Gastrocnemius medialis (tissue), 4 donors: ENCODE measurements at regions of chr7 and their contacts with region 1.

Region 1: DNA sequence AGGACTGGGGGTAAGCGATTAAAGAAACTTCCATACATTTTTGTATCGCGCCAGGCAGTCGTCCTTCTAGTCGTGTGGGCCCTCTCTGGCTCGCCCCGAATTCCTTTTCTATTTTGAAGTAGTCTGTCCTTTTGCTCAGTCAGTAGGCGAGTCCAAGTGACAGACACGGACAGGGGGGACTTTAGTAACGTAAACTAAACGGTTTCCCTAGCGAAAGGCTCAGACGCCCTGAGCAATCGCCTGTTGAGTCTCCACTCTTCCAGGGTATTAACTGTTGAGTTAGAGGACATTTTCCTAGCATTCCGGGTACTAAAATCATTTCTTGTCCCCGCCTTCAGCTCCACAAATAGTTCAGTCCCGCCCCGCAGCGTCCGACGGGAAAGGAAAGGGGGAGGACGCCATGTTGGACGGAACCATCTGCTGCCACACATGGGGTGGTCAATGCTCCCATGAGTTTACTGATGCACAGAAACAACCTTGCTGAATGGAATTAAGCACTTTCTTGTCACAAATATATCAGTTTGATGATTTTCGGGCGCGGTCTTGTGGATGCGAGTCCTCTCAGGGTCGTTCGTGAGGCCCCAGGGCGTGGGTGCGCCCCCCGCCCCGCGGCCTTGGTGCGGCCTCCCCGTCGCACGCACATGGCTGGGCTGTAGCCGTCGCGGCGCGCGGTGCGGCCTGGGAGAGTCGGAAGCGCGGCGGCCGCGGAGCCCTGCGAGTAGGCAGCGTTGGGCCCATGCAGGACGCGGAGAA is at the start of gene EIF3B:
- DNase-seq: peak; percentile 86 to 87
- ATAC-seq: peak; percentile 94 to 95
- H3K4me3 ChIP-seq: peak within 1 kb of the TSS; percentile 80 to 96 (median 88)
- H3K27ac ChIP-seq: peak within 1 kb of the TSS; percentile 90 to 100 (median 94)
- H3K4me1 ChIP-seq: peaks cover 33 to 34% of the 10 kb centered on the region in 2 donors
- H3K27me3 ChIP-seq: no peaks in the 10 kb centered on the region
- CTCF ChIP-seq: peak in 2 of 5 experiments; percentile 24 to 53
- POLR2A ChIP-seq: peak; percentile 73 to 89
- total RNA-seq, gene EIF3B: 105 to 207 (median 195) TPM

Region 2: GRCh38 chr7:1569833-1570633 is 784.3 kb before region 1 on chr7 and contains the start of gene PSMG3:
- in situ Hi-C with region 1: no loop called
- intact Hi-C with region 1: loop called (anchors 10 kb)
- DNase-seq: peak; percentile 86 to 87
- ATAC-seq: peak; percentile 83 to 84
- H3K4me3 ChIP-seq: peak within 1 kb of the TSS; percentile 77 to 98 (median 90)
- H3K27ac ChIP-seq: peak within 1 kb of the TSS; percentile 93 to 99 (median 94)
- H3K4me1 ChIP-seq: peaks cover 26 to 42% of the 10 kb centered on the region in 2 donors
- H3K27me3 ChIP-seq: no peaks in the 10 kb centered on the region
- CTCF ChIP-seq: peak; percentile 28 to 53 (median 37)
- POLR2A ChIP-seq: peak; percentile 82 to 85
- total RNA-seq, gene PSMG3: 25.4 to 46.4 (median 32.2) TPM

Region 3: DNA sequence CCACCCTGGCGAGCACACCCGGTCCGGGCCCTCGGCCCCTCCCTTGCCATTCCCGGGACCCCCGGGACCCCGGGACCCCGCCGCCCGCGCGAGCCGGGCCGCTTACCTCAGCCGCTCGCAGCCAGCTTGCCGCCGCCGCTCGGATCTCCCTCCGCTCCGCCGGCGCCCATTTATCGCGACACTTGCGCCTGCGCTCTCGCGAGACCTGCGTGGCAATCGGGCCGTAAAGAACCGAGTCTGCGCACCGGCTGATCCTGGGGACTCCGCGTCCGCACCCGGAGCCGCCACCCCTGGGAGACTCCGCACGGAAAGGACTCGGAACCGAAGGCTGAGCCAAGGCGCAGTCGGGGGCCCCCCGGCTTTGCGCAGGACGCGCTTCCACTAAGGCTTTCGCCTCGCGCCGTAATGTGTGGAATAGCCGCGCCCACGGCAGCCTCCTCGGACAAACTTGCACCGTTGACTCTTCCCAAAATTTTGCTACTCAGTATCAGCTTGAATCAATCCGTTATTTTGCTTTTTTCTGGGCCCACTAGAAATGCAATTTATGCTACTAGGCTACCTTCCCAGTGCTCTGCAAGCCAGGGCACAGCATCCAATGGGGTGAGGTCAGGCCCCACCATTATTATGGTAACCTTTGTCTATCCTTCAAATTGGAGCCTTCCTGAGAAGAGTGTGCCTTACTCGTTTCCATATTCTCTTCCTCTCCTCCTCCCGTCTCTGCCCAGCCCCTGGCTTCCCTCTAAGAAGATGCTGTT is 121.4 kb before region 1 on chr7 and contains the start of gene MAD1L1:
- in situ Hi-C with region 1: no loop called
- intact Hi-C with region 1: loop called (anchors 2 kb)
- DNase-seq: peak; percentile 69 to 78
- ATAC-seq: peak; percentile 95
- H3K4me3 ChIP-seq: peak within 1 kb of the TSS; percentile 82 to 99 (median 92)
- H3K27ac ChIP-seq: peak within 1 kb of the TSS; percentile 73 to 86 (median 80)
- H3K4me1 ChIP-seq: peaks cover 16 to 22% of the 10 kb centered on the region in 2 donors
- H3K27me3 ChIP-seq: no peaks in the 10 kb centered on the region
- CTCF ChIP-seq: no peak
- POLR2A ChIP-seq: peak in 1 of 2 donors; percentile 12
- total RNA-seq, gene MAD1L1: 19.7 to 32.4 (median 22.7) TPM

Region 4: DNA sequence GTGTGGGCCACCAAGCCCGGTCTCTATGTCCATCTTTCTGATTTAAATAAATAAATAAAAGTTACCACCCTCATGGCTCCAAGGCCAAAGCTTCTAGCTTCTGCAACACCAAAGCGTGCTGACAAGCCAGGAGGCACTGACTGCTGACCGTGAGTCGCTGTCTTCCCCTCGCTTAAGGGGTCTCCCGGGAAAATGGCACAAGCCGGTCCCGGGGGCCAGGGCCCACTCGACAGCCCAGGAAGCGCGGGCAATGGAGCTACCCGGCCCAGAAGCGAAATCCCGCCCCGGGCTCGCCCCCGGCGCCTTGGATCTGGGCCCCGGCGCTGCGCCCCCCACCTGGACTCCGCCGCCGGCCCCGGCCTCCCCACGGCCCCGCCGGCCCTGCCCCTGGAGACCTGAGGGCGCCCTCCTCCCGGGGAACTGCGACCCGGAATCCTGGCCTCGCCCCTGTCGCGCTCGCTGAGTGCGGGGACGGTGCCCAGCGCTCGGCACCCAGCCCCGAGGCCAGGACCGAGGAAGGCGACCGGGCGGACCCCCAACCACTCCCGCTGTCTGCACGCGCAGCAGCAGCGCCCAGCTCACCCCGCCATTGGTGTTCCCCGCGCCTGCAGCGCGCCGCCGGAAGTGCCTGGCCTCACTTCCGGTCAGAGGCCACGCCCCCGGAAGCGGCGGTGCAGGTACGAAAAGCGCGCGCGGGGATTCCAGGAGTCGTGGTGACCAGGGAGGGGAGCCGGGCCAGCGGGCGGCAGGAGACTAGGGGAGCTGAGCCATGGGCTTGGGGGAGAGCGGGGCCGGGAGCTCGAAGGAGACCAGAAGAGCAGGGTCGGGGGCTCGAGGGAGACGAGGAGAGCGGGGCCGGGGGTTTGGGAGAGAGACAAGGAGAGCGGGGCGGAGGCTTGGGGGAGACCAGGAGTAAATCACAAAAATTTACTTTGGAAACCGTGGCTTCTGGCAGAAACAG is 112.5 kb before region 1 on chr7 and contains the starts of genes MRM2 and NUDT1:
- in situ Hi-C with region 1: loop called in 1 of 4 experiments (anchors 10 kb)
- intact Hi-C with region 1: no loop called
- DNase-seq: peak; percentile 58 to 75
- ATAC-seq: peak; percentile 88
- H3K4me3 ChIP-seq: peak within 1 kb of the TSS; percentile 80 to 97 (median 92)
- H3K27ac ChIP-seq: peak within 1 kb of the TSS; percentile 55 to 85 (median 70)
- H3K4me1 ChIP-seq: peaks cover 12 to 13% of the 10 kb centered on the region in 2 donors
- H3K27me3 ChIP-seq: no peaks in the 10 kb centered on the region
- CTCF ChIP-seq: no peak
- POLR2A ChIP-seq: peak; percentile 39 to 57
- total RNA-seq, gene MRM2: 14.1 to 41.7 (median 16.9) TPM
- total RNA-seq, gene NUDT1: 14.7 to 22.5 (median 18.1) TPM

Region 5: DNA sequence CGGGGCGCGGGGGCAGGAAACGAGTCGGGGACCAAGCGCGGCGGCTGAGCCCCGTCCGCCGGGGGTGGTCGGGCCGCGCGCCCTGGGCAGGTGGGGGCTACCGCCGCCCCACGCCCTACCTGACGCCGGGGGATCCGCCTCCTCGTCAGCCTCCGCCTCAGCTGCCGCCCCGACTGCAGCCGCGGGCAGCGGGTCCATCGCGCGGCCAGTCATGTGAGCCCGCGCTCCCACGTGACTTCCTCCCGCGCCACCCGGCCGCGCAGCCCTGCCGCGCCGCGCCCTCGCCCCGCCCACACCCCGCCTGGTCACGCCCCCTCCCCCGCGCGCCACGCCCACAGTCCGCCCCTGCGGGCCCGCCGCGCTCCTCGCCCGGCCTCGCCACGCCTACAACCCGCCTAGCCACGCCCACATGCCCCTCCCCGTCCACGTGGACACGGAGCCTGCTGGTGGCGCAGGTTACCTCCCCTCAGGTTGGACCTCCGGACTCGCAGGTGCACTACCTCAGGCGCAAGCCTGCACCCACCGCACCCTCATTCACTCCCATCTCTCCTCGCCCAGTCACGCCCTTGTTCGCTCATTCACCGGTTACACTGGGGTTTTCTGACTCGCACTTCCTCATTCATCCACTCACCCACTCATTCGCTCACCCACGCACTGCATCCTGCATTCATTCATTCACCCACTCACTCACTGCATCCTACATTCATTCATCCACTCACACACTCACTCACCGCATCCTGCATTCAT is 40.0 kb before region 1 on chr7 and contains the start of gene SNX8:
- in situ Hi-C with region 1: no loop called
- intact Hi-C with region 1: loop called (anchors 1 kb)
- DNase-seq: peak; percentile 80
- ATAC-seq: peak; percentile 93 to 96
- H3K4me3 ChIP-seq: peak within 1 kb of the TSS; percentile 75 to 90 (median 78)
- H3K27ac ChIP-seq: peak within 1 kb of the TSS; percentile 63 to 80 (median 74)
- H3K4me1 ChIP-seq: no peaks in the 10 kb centered on the region
- H3K27me3 ChIP-seq: no peaks in the 10 kb centered on the region
- CTCF ChIP-seq: peak in 1 of 5 experiments; percentile 6
- POLR2A ChIP-seq: peak; percentile 44 to 64
- total RNA-seq, gene SNX8: 6.4 to 28.1 (median 24.8) TPM

Region 6: GRCh38 chr7:2403014-2403717 is 48.8 kb after region 1 on chr7 and contains the start of gene CHST12:
- in situ Hi-C with region 1: no loop called
- intact Hi-C with region 1: loop called (anchors 1 kb)
- DNase-seq: peak; percentile 89 to 92
- ATAC-seq: peak; percentile 89 to 92
- H3K4me3 ChIP-seq: peak within 1 kb of the TSS; percentile 84 to 97 (median 86)
- H3K27ac ChIP-seq: peak within 1 kb of the TSS; percentile 75 to 85 (median 82)
- H3K4me1 ChIP-seq: peaks cover 18 to 21% of the 10 kb centered on the region in 2 donors
- H3K27me3 ChIP-seq: no peaks in the 10 kb centered on the region
- CTCF ChIP-seq: no peak
- POLR2A ChIP-seq: peak; percentile 50 to 67
- total RNA-seq, gene CHST12: 5.5 to 13.1 (median 10.1) TPM